Activated CD4-positive, alpha-beta T cell treated with anti-CD3 and anti-CD28 coated beads, Interleukin-2, amount 10 ng/mL, durations not matched to agents 7 days and 5 days (primary cell): ENCODE measurements at regions of chr1 and their contacts with region 1.

Region 1: DNA sequence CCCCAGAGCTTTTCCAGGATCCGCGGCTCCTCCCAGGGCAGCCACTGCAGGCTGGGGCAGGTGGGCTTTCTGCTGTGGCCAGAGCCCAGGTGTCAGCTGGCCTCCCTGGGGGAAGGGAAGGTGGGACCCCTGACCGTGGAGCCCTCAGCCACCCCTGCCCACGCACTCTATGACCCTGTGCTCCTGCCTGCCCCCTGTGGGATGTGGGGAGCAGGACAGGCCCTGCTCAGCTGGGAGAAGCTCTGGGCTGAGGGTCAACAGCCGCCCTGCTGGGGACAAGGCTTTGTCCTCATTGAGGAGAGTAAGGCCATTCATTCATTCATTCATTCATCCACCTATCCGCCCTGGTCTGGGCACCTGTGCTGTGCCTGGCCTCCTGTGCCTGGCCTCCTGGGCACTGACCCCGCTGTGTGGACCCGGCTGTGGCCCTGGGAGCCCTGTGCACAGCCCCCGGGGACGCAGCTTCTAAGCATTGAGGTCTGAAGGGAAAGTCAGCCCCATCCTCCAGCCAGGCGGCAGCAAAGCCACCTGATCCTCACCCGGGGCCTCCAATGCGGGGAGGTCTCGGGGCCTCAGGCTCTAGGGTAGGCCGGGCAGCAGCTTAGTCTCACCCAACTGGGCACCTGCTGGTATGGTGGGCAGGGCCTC is 5.9 kb downstream of the TNFRSF14 start:
- DNase-seq: no peak
- H3K4me3 Mint-ChIP-seq: no peak overlapping the region
- H3K27ac Mint-ChIP-seq: no peak overlapping the region
- H3K4me1 Mint-ChIP-seq: peaks cover 18% of the 10 kb centered on the region
- H3K27me3 Mint-ChIP-seq: no peaks in the 10 kb centered on the region

Region 2: DNA sequence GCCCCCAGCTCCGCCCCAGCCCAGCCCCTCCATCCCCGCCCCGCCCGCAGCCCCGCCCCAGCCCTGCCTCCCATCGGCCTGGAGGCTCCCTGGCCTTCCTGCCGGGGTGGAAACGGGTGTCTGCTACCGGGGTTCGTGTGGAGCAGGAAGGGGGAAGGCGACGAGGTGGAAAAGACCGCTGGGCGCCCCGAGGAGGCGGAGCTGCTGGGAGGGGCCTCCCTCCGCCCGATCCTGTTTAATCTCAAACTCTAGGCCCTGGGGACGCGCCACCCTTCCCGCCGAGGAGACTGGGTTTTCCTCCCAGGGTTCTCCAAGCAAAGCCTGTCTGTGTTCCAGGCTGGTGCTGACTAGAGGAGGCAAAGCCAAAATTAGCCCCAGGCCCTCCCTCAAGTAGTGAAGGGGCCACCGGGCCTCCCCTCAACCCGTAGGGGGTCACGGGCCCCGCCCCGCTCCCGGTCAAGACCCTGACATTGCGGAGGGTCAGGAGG is 1404.6 kb before region 1 on chr1:
- CTCF ChIA-PET with region 1: no interaction called
- POLR2A ChIA-PET with region 1: no interaction called
- DNase-seq: peak; percentile 65
- H3K4me3 Mint-ChIP-seq: peak overlapping the region; percentile 66
- H3K27ac Mint-ChIP-seq: peak overlapping the region; percentile 81
- H3K4me1 Mint-ChIP-seq: peaks cover 16% of the 10 kb centered on the region
- H3K27me3 Mint-ChIP-seq: no peaks in the 10 kb centered on the region

Region 3: GRCh38 chr1:2575801-2576663 is 14.0 kb after region 1 on chr1:
- CTCF ChIA-PET with region 1: interaction called, 17 read pairs
- POLR2A ChIA-PET with region 1: no interaction called
- DNase-seq: no peak
- H3K4me3 Mint-ChIP-seq: no peak overlapping the region
- H3K27ac Mint-ChIP-seq: peak overlapping the region; percentile 72
- H3K4me1 Mint-ChIP-seq: peaks cover 50% of the 10 kb centered on the region
- H3K27me3 Mint-ChIP-seq: no peaks in the 10 kb centered on the region

Region 4: GRCh38 chr1:2586154-2587070 is 24.4 kb after region 1 on chr1 and contains the start of gene PRXL2B:
- CTCF ChIA-PET with region 1: interaction called, 12 read pairs
- POLR2A ChIA-PET with region 1: interaction called, 8 read pairs
- DNase-seq: peak; percentile 98
- H3K4me3 Mint-ChIP-seq: peak within 1 kb of the TSS; percentile 91
- H3K27ac Mint-ChIP-seq: peak within 1 kb of the TSS; percentile 97
- H3K4me1 Mint-ChIP-seq: peaks cover 28% of the 10 kb centered on the region
- H3K27me3 Mint-ChIP-seq: no peaks in the 10 kb centered on the region
- total RNA-seq, gene PRXL2B: 25.2 to 33.3 TPM